GM12878 (cell line): ENCODE measurements at regions of chr9 and their contacts with region 1.

Region 1: GRCh38 chr9:69502671-69503301 is 169.4 kb downstream of the APBA1 start:
- DNase-seq: no peak
- ATAC-seq: no peak
- H3K4me3 ChIP-seq: no peak overlapping the region
- H3K27ac ChIP-seq: no peak overlapping the region
- H3K4me1 ChIP-seq: no peaks in the 10 kb centered on the region
- H3K27me3 ChIP-seq: no peaks in the 10 kb centered on the region
- CTCF ChIP-seq: no peak
- EP300 ChIP-seq: no peak
- POLR2A ChIP-seq: no peak
- RAD21 ChIP-seq: no peak

Region 2: DNA sequence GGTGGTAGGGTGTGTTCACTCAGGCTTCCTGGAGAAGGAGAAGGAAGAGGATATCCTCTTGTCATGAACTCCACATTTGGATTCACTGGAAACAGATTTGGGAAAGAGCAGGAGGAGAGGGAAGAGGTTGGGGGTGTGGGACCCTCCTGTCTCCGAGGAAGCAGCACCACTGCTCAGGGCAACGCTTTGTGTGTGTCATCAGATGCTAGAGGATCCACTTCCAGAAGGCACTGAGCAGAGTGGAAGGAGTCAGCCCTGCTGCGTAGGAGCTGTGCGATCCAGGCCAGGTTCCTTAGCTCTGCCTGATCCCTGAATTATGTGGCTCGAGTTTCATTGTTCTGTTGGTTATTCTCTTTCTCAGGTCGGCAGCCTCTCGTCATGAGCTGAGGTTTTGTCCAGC is 366.0 kb before region 1 on chr9:
- CTCF ChIA-PET with region 1: no interaction called
- POLR2A ChIA-PET with region 1: no interaction called
- RAD21 ChIA-PET with region 1: no interaction called
- SMC1A ChIA-PET with region 1: no interaction called
- in situ Hi-C with region 1: no loop called
- intact Hi-C with region 1: no loop called
- DNase-seq: no peak
- ATAC-seq: no peak
- H3K4me3 ChIP-seq: no peak overlapping the region
- H3K27ac ChIP-seq: no peak overlapping the region
- H3K4me1 ChIP-seq: no peaks in the 10 kb centered on the region
- H3K27me3 ChIP-seq: no peaks in the 10 kb centered on the region; a peak in 1 of 4 replicates
- CTCF ChIP-seq: no peak
- EP300 ChIP-seq: no peak
- POLR2A ChIP-seq: no peak
- RAD21 ChIP-seq: no peak

Region 3: DNA sequence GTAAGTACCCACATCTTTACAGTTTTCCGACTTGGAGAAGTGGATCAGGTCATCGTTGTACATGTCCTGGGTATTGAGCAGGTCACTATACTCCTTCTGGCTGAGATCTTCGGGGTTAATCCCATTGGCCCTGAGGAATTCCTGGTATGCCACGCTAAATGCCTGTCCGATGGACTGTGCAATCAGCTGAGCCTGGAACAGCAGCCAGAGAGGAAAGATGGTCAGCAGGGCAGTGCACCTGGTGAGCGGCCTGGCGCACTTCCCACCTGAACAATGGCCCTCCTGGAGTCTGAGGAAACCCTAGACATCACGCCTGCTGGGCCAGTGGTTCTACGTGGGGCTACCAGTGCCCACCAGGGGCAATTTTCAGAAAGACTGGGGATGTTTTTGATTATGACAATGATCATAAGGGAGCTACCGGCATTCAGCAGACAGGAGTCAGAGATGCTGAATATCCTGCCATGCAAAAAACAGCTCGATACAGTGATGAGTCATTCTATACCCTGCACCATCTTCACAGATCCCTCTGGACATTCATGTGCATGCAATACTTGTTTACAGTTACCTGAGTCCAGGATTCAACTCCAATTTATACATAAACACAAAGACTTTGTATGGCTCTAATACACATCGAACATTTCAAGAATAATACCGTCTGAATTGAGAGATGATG is 50.5 kb before region 1 on chr9:
- CTCF ChIA-PET with region 1: no interaction called
- POLR2A ChIA-PET with region 1: no interaction called
- RAD21 ChIA-PET with region 1: no interaction called
- SMC1A ChIA-PET with region 1: no interaction called
- in situ Hi-C with region 1: loop called (anchors 5 kb)
- intact Hi-C with region 1: no loop called
- DNase-seq: no peak
- ATAC-seq: no peak
- H3K4me3 ChIP-seq: no peak overlapping the region
- H3K27ac ChIP-seq: no peak overlapping the region
- H3K4me1 ChIP-seq: no peaks in the 10 kb centered on the region
- H3K27me3 ChIP-seq: peaks cover 0 to 2% of the 10 kb centered on the region in 2 experiments; a peak in 2 of 4 replicates
- CTCF ChIP-seq: no peak
- EP300 ChIP-seq: no peak
- POLR2A ChIP-seq: no peak
- RAD21 ChIP-seq: no peak

Region 4: DNA sequence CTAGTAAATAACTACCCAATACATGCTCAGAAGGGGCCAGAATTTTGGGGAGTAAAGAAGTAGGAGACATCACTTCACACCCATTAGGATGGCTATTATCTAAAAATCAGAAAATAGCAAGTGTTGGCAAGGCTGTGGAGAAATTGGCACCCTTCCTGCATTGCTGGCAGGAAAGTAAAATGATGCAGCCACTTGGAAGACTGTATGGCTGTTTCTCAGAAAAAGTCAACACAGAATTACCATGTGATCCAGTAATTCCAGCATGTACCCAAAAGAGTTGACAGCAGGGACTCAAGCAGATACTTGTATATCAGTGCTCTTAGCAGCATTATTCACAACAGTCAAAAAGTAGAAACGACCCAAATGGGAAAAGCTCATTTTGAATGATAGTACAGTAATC is 61.8 kb after region 1 on chr9:
- CTCF ChIA-PET with region 1: no interaction called
- POLR2A ChIA-PET with region 1: no interaction called
- RAD21 ChIA-PET with region 1: no interaction called
- SMC1A ChIA-PET with region 1: no interaction called
- in situ Hi-C with region 1: no loop called
- intact Hi-C with region 1: no loop called
- DNase-seq: no peak
- ATAC-seq: no peak
- H3K4me3 ChIP-seq: no peak overlapping the region
- H3K27ac ChIP-seq: no peak overlapping the region
- H3K4me1 ChIP-seq: no peaks in the 10 kb centered on the region
- H3K27me3 ChIP-seq: no peaks in the 10 kb centered on the region
- CTCF ChIP-seq: no peak
- EP300 ChIP-seq: no peak
- POLR2A ChIP-seq: no peak
- RAD21 ChIP-seq: no peak